ENCODE measurements at regions of chrX and their contacts with region 1.

Region 1: DNA sequence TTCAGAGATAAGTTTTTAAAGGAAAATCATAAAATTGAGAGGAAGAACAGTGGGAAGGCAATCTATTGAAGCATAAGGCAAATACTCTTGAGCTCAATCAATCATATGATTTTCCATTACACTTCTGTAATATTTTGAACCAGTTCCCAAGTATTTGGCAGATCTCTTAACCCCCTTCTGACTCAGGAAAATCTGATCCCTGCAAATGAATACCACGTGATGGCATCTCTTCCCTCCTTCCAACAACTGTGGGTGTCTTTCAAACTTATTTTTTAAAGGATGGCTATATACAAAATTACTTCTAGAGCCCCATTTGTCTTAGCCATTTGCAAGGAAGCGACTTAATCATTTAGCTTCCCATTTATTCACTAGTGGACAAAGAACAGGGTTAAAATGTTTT is 41.9 kb downstream of the AMOT start:
- DNase-seq: no peak
- H3K4me3 ChIP-seq: no peak overlapping the region
- H3K27ac ChIP-seq: no peak overlapping the region
- H3K4me1 ChIP-seq: no peaks in the 10 kb centered on the region
- H3K27me3 ChIP-seq: peaks cover 0 to 29% of the 10 kb centered on the region in 2 donors
- CTCF ChIP-seq: no peak
- POLR2A ChIP-seq: no peak

Region 2: GRCh38 chrX:111231251-111231650 is 1567.5 kb before region 1 on chrX:
- intact Hi-C with region 1: no loop called
- DNase-seq: no peak
- H3K4me3 ChIP-seq: no peak overlapping the region
- H3K27ac ChIP-seq: no peak overlapping the region
- H3K4me1 ChIP-seq: no peaks in the 10 kb centered on the region
- H3K27me3 ChIP-seq: peaks cover 0 to 58% of the 10 kb centered on the region in 2 donors
- CTCF ChIP-seq: no peak
- POLR2A ChIP-seq: no peak

Region 3: GRCh38 chrX:112642349-112642748 is 156.4 kb before region 1 on chrX:
- intact Hi-C with region 1: loop called (anchors 5 kb)
- DNase-seq: peak in 1 of 2 donors; percentile 18
- H3K4me3 ChIP-seq: no peak overlapping the region
- H3K27ac ChIP-seq: no peak overlapping the region
- H3K4me1 ChIP-seq: no peaks in the 10 kb centered on the region
- H3K27me3 ChIP-seq: peaks cover 0 to 52% of the 10 kb centered on the region in 2 donors
- CTCF ChIP-seq: peak; percentile 56 to 62 (median 58)
- POLR2A ChIP-seq: no peak

Measured in breast epithelium (tissue), 4 donors.